Sigmoid colon (tissue), 7 donors: ENCODE measurements at regions of chr22 and their contacts with region 1.

Region 1: GRCh38 chr22:36123673-36124630 is 36.6 kb downstream of the APOL3 start:
- DNase-seq: peak; percentile 98
- H3K4me3 ChIP-seq: peak overlapping the region in 3 of 4 donors; percentile 22 to 39 (median 30)
- H3K27ac ChIP-seq: peak overlapping the region; percentile 80 to 87 (median 84)
- H3K4me1 ChIP-seq: peaks cover 0 to 12% (median 7%) of the 10 kb centered on the region in 4 donors
- H3K27me3 ChIP-seq: no peaks in the 10 kb centered on the region
- CTCF ChIP-seq: peak; percentile 96 to 100 (median 98)
- EP300 ChIP-seq: peak in 2 of 4 donors; percentile 37 to 41
- POLR2A ChIP-seq: no peak

Region 2: GRCh38 chr22:35350539-35351503 is 773.1 kb before region 1 on chr22:
- intact Hi-C with region 1: loop called (anchors 5 kb)
- DNase-seq: peak; percentile 98
- H3K4me3 ChIP-seq: peak overlapping the region; percentile 27 to 57 (median 52)
- H3K27ac ChIP-seq: peak overlapping the region; percentile 82 to 88 (median 85)
- H3K4me1 ChIP-seq: peaks cover 6 to 41% (median 25%) of the 10 kb centered on the region in 4 donors
- H3K27me3 ChIP-seq: no peaks in the 10 kb centered on the region
- CTCF ChIP-seq: peak; percentile 79 to 97 (median 89)
- EP300 ChIP-seq: peak in 1 of 4 donors; percentile 34
- POLR2A ChIP-seq: peak in 1 of 2 donors; percentile 44

Region 3: GRCh38 chr22:35627264-35628041 is 496.5 kb before region 1 on chr22:
- intact Hi-C with region 1: loop called (anchors 1 kb)
- DNase-seq: peak; percentile 93
- H3K4me3 ChIP-seq: peak overlapping the region; percentile 34 to 64 (median 58)
- H3K27ac ChIP-seq: peak overlapping the region; percentile 85 to 94 (median 90)
- H3K4me1 ChIP-seq: peaks cover 0 to 26% (median 23%) of the 10 kb centered on the region in 4 donors
- H3K27me3 ChIP-seq: no peaks in the 10 kb centered on the region
- CTCF ChIP-seq: peak in 2 of 4 experiments; percentile 24 to 47
- EP300 ChIP-seq: no peak
- POLR2A ChIP-seq: peak; percentile 7 to 14

Region 4: DNA sequence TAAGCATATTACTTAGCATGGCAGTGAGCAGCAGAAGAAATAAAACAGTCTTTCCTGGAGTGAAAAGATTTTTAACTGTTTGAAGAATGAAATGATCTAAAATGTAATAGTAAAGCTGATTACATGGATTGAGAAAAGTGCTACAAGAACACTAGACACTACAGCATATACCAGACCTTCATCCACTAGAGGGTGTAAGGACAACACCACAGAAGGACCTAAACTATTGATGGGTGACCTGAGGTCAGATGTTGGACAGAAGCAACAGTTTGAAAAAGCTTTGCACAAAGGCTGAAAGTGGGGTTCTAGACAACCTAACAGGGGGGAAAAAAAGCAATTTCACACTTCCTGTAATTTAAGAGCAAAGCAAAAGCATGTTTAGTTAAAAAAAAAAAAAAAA is 193.0 kb before region 1 on chr22:
- intact Hi-C with region 1: loop called (anchors 2 kb)
- DNase-seq: no peak
- H3K4me3 ChIP-seq: no peak overlapping the region
- H3K27ac ChIP-seq: peak overlapping the region in 2 of 4 donors; percentile 11 to 12
- H3K4me1 ChIP-seq: peaks cover 0 to 19% (median 10%) of the 10 kb centered on the region in 4 donors
- H3K27me3 ChIP-seq: no peaks in the 10 kb centered on the region
- CTCF ChIP-seq: peak; percentile 57 to 78 (median 72)
- EP300 ChIP-seq: no peak
- POLR2A ChIP-seq: no peak

Region 5: DNA sequence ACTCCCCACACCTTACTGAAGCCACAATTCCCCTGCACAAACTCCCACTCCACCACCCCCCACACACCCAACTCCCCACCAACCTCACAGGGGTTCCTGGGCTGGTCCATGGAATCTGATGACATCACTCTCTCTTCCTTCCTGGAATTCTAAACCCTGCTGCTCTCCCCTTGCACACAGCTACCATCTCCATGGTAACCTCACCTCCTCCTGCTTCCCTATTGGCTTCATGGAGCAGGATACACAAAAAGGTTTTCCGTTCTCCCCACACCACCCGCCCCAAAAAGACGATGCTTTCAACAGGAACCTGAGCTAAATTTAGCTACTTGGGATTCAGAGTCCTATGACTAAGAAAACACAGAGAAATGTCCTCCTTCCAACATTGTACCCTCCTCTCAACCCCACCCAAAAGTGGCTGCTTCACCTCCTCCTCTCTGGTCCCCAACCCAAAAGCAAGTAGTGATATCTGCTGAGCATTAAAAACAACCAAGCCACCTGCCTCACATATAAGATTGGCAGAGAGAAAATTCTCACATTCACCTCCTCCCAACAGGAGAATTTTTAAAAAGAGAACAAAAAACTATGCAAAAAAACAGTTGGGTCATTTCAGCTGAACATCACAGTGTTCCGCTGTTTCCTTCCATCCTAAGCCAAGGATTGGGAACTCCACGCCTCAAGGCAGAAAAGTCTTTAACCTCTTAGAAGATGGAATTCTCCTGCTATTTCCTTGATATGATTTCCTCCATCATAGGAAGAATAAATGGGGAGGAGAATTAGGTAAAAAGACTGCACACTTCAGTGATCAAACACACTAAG is 162.3 kb before region 1 on chr22:
- intact Hi-C with region 1: no loop called
- DNase-seq: peak; percentile 80
- H3K4me3 ChIP-seq: peak overlapping the region in 1 of 4 donors; percentile 30
- H3K27ac ChIP-seq: peak overlapping the region; percentile 41 to 77 (median 58)
- H3K4me1 ChIP-seq: peaks cover 0 to 55% (median 47%) of the 10 kb centered on the region in 4 donors
- H3K27me3 ChIP-seq: no peaks in the 10 kb centered on the region
- CTCF ChIP-seq: no peak
- EP300 ChIP-seq: no peak
- POLR2A ChIP-seq: no peak

Region 6: GRCh38 chr22:36065775-36066559 is 58.0 kb before region 1 on chr22:
- intact Hi-C with region 1: loop called (anchors 1 kb)
- DNase-seq: peak; percentile 97
- H3K4me3 ChIP-seq: peak overlapping the region; percentile 21 to 59 (median 48)
- H3K27ac ChIP-seq: peak overlapping the region; percentile 83 to 95 (median 85)
- H3K4me1 ChIP-seq: peaks cover 0 to 20% (median 16%) of the 10 kb centered on the region in 4 donors
- H3K27me3 ChIP-seq: no peaks in the 10 kb centered on the region
- CTCF ChIP-seq: peak; percentile 100
- EP300 ChIP-seq: no peak
- POLR2A ChIP-seq: no peak

Region 7: DNA sequence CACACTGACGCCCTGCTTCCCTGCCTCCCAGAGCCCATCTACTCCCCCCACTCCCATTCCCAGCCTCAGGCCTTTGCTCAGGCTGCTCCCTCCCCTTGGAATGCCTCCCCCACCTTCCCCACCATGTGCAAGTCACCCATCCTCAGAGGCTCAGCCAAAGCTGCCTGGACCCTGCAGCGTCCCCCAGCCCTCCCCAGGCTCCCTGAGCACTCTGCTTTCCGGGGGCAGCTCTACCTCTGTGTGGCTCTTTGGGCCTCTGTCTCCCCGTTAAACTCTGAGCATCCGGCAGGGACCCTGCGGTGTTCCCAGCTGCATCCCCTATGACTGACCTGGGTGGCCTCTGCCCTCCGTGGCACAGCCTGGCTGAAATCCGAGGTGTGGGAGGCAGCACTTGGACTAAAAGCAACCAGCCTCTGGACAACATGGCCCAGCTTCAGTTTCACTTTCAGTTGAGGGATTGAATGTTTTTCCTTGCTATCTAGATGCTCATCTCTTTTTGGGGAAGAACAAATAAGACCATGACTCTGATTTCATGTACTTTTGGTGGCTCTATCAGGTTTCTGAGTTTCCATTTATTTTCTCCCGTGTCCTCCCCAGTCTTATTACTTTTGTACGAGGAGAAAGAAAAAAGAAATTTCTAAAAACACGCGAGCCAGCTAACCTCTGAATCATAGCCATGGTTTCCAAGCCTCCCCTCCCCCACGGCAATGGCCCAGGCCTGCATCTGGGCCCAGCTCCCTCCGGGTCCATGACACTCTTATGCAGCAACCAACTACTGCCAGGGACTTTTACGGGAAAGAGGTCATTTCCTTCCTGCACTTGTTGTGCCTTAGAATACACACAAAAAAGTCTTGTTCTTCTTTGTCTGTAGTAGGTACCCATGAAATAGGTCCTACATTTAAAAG is 32.8 kb after region 1 on chr22:
- intact Hi-C with region 1: no loop called
- DNase-seq: peak; percentile 96
- H3K4me3 ChIP-seq: peak overlapping the region; percentile 23 to 47 (median 42)
- H3K27ac ChIP-seq: peak overlapping the region; percentile 89 to 90 (median 90)
- H3K4me1 ChIP-seq: peaks cover 0 to 63% (median 47%) of the 10 kb centered on the region in 4 donors
- H3K27me3 ChIP-seq: no peaks in the 10 kb centered on the region
- CTCF ChIP-seq: no peak
- EP300 ChIP-seq: peak in 3 of 4 donors; percentile 25 to 68 (median 39)
- POLR2A ChIP-seq: no peak